ENCODE measurements at regions of chr3 and their contacts with region 1.

Region 1: DNA sequence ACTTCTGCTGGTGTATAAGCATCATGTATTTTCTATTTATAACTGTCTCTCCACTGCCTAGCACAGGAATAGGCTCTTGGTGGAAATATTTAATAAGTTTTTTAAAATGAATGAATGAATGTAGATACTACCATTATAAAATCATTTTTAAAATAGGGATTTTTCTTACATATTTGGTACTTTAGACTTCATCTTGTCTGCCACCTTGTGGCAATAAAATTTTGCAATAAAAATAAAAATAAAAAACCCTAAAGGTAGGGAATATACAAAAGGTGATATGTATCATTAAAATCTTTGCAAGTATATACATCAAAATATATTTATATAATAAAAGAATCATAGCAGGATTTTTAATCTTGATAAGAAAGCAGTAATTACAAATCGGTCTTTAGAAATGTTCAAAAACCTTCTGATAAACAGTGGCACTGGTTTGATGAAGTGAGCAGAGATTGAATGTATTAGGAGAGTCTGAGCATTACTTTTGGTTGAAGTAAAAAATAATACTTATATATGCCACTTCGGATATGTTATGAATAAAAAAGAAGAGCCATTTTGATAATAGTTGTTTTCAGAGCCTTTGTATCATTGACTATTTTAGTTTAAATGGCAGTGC is 95.2 kb downstream of the SPATA16 start:
- DNase-seq: no peak
- ATAC-seq: no peak
- H3K4me3 ChIP-seq: no peak overlapping the region
- H3K27ac ChIP-seq: no peak overlapping the region
- H3K4me1 ChIP-seq: no peaks in the 10 kb centered on the region
- H3K27me3 ChIP-seq: no peaks in the 10 kb centered on the region
- CTCF ChIP-seq: no peak
- EP300 ChIP-seq: no peak
- POLR2A ChIP-seq: no peak
- RAD21 ChIP-seq: no peak

Region 2: DNA sequence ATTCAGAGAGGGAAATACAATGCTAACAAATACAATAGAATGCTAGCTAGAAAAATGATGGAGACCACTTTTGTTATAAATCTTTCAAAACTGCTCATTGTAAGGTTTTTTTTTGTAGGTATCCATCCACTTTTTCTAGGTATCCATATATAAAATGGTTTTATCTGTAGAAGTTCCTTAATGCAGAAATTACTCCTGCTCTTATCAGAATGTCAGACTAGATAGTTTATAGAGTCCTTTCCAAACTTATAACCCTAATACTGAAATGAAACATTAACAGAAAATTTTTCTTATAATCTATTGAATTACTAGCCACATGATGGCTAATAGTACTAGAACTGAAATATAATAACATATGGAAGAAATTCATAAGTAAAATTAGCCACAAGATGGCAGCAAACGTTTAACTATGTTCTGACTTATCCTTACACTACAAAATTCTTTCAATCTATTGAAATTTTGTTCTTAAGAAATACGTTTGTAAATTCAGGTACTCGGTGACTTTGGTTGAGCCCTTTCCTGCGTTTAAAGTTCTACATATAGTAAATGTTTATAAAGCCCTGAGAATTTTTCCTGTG is 236.8 kb before region 1 on chr3:
- CTCF ChIA-PET with region 1: no interaction called
- POLR2A ChIA-PET with region 1: no interaction called
- in situ Hi-C with region 1: no loop called
- intact Hi-C with region 1: loop called (anchors 2 kb)
- DNase-seq: peak; percentile 7
- ATAC-seq: no peak
- H3K4me3 ChIP-seq: no peak overlapping the region
- H3K27ac ChIP-seq: no peak overlapping the region
- H3K4me1 ChIP-seq: peaks cover 7% of the 10 kb centered on the region; the same call in 1 of the 2 replicates
- H3K27me3 ChIP-seq: no peaks in the 10 kb centered on the region
- CTCF ChIP-seq: peak; percentile 20; the same call in 1 of the 2 replicates
- EP300 ChIP-seq: no peak
- POLR2A ChIP-seq: no peak
- RAD21 ChIP-seq: no peak

Region 3: GRCh38 chr3:172836390-172836997 is 209.4 kb before region 1 on chr3:
- CTCF ChIA-PET with region 1: no interaction called
- POLR2A ChIA-PET with region 1: no interaction called
- in situ Hi-C with region 1: loop called (anchors 10 kb)
- intact Hi-C with region 1: loop called (anchors 5 kb)
- DNase-seq: peak; percentile 35
- ATAC-seq: peak; percentile 80
- H3K4me3 ChIP-seq: no peak overlapping the region
- H3K27ac ChIP-seq: no peak overlapping the region
- H3K4me1 ChIP-seq: no peaks in the 10 kb centered on the region
- H3K27me3 ChIP-seq: no peaks in the 10 kb centered on the region
- CTCF ChIP-seq: peak; percentile 57
- EP300 ChIP-seq: no peak
- POLR2A ChIP-seq: no peak
- RAD21 ChIP-seq: no peak

Region 4: DNA sequence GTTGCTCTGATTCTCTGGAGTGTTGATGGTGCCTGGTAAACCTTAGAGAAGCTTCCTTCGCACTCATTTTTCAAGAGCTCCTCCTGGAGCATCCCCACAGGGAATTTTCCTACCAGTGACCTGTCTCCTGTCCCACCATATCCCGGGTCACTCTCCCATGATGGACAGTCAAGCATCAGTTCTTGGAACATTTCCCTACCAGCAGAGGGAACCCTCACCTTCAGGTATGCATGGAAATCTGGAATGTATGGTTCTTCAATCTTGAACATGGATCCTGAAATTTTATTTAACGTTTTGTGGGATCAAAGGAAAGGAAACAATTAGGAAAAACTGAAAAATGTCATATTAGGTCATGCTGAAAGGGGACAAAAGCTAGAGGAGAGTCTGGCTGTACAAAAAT is 58.6 kb before region 1 on chr3:
- CTCF ChIA-PET with region 1: no interaction called
- POLR2A ChIA-PET with region 1: no interaction called
- in situ Hi-C with region 1: no loop called
- intact Hi-C with region 1: loop called (anchors 1 kb)
- DNase-seq: peak; percentile 16
- ATAC-seq: peak; percentile 87
- H3K4me3 ChIP-seq: no peak overlapping the region
- H3K27ac ChIP-seq: no peak overlapping the region
- H3K4me1 ChIP-seq: no peaks in the 10 kb centered on the region
- H3K27me3 ChIP-seq: no peaks in the 10 kb centered on the region
- CTCF ChIP-seq: peak; percentile 59
- EP300 ChIP-seq: no peak
- POLR2A ChIP-seq: no peak
- RAD21 ChIP-seq: no peak